Activated T-helper 1 cell treated with anti-CD3 and anti-CD28 coated beads, Interleukin-12 subunit alpha, Interleukin-12 subunit beta, Interleukin-2, Interleukin-4 antibody, amounts not matched to agents 30 ng/mL and 10 ng/mL and 1 ng/mL, durations not matched to agents 14 hours and 24 hours and 36 hours (primary cell): ENCODE measurements at regions of chr1 and their contacts with region 1.

Region 1: DNA sequence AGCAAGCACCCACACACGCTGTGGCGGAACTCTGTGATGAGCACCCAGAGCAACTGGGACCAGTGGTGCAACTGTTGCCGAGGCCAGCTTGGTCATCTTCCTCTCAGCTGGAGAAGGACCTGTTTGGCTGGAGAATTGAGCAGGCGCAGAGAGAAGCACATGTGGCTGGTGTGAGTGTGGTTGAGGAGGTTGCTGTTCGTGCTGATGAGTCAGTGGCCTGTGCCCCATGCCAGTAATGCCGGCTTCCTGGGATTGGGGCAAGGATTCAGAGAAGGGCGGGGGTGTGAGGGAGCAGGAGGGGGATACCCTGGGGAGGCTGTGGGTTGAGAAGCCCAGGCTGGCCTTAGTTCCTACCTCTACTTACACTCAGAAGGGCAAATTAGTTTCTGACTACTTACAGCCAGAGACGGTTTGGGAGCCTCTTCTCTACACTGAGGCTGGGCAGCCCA is 57.5 kb upstream of the EPS8L3 start:
- DNase-seq: no peak
- H3K4me3 Mint-ChIP-seq: no peak overlapping the region
- H3K27ac Mint-ChIP-seq: peak overlapping the region; percentile 73
- H3K4me1 Mint-ChIP-seq: peaks cover 60% of the 10 kb centered on the region
- H3K27me3 Mint-ChIP-seq: no peaks in the 10 kb centered on the region

Region 2: DNA sequence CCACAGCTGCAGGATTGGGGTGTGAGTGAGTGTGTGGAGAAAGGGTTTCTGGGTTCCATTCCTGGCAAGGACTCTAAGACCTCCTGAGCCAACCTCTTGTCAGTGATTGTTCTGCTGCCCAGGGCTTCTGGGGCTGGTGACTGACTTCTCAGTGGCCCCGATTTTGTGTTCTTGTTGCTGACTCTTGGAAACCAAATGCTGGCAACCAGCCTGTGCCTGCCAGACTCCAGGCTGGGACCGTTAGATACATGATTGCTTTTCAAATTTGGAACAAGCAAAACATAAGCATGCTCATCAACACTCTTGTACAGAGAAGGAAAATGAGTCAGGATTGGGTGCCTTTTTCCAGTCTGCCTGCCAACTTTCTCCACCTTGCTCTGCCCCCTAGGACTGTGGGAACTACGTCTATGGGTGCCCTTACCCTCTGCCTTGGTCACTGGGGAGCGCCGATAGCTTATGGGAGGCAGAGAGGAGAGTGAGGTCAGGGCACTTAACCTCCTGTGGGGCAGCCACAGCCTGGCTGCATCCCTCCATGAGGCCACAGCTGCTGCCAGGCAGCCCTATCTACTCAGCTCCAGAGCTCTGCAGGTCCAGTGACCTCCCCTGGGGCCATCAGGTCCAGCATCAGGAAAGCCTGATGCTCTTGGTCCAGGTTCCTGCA is 18.2 kb before region 1 on chr1:
- intact Hi-C with region 1: loop called (anchors 1 kb)
- DNase-seq: no peak
- H3K4me3 Mint-ChIP-seq: peak overlapping the region; percentile 72
- H3K27ac Mint-ChIP-seq: peak overlapping the region; percentile 96
- H3K4me1 Mint-ChIP-seq: peaks cover 87% of the 10 kb centered on the region
- H3K27me3 Mint-ChIP-seq: no peaks in the 10 kb centered on the region

Region 3: DNA sequence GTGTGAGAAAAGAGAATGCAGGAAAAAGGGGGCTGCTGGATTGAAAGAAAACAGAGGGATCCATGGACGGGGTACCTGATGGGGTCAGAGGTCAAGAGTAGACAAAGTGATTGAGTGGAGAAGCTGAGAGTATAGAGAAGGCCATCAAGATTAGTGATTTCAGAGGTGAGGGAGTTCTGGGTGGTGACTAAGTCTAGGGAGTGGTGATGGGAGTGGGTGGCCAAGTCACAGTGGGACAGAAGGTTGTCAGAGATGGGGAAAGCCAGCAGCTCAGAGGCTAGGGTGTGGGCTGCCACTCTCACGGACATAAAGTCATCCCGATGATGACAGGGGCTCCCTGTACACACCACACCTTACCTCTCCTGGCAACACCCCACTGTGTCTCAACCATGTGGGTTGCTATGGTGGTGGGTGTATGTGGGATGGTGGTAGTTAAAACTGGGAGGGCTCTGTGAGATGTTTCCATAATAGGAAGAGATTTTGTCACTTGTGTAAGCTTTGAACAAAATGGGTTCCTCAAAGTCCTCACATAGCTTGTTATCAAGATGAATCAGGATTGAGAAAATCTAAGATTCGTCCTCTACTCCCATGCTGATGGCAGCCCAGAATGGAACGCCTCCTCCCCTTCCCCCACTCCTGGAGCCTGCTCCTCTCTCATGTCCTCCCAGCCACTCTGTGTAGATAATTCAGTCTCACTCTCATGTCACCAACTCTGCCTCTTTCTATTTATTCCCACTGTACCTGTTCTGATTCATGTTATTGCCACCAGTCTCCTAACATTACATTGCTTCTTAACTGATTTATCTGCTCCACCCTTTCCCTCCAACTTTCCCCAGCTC is 69.1 kb after region 1 on chr1:
- intact Hi-C with region 1: loop called (anchors 1 kb)
- DNase-seq: no peak
- H3K4me3 Mint-ChIP-seq: peak overlapping the region; percentile 34
- H3K27ac Mint-ChIP-seq: peak overlapping the region; percentile 85
- H3K4me1 Mint-ChIP-seq: peaks cover 13% of the 10 kb centered on the region
- H3K27me3 Mint-ChIP-seq: no peaks in the 10 kb centered on the region